Dendritic cell treated with granulocyte-macrophage colony-stimulating factor and Interleukin-4, amounts not matched to agents 40 ng/mL and 50 ng/mL, for 4 days (primary cell): ENCODE measurements at regions of chr2 and their contacts with region 1.

Region 1: DNA sequence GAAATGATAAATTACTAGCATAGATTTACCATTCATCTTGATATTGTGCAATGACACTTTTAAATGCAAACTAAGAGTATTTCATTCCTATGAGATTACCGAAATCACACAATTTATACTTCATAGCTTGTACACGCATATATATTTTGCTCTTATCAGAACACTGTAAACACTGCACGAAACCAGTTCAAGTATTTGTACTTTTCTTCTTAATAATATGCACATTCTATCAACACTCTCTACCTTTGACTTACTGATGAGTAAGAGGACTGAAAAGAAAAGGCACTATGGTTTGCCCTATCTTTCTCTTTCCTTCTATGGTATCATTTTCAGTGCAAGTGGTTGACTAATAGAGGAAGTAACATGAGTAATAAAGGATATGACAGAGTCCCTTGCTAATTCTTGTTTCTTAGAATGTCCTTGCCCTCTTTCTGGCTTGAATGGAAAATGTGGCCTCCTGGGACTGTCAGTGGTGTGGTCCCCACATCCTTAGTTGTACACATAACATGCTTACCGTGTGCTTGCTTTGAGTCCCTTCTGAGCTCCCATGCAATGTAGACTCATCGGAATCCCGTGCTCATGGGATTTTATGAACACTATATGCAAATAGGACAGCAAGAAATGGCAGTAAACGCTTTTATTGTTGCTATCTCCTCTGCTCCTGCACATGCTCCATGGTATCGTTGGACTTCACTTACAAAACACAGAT is 363.5 kb upstream of the TNP1 start:
- H3K4me3 Mint-ChIP-seq: no peak overlapping the region
- H3K27ac Mint-ChIP-seq: no peak overlapping the region
- H3K4me1 Mint-ChIP-seq: peaks cover 48% of the 10 kb centered on the region
- H3K27me3 Mint-ChIP-seq: peaks cover 73% of the 10 kb centered on the region

Region 2: DNA sequence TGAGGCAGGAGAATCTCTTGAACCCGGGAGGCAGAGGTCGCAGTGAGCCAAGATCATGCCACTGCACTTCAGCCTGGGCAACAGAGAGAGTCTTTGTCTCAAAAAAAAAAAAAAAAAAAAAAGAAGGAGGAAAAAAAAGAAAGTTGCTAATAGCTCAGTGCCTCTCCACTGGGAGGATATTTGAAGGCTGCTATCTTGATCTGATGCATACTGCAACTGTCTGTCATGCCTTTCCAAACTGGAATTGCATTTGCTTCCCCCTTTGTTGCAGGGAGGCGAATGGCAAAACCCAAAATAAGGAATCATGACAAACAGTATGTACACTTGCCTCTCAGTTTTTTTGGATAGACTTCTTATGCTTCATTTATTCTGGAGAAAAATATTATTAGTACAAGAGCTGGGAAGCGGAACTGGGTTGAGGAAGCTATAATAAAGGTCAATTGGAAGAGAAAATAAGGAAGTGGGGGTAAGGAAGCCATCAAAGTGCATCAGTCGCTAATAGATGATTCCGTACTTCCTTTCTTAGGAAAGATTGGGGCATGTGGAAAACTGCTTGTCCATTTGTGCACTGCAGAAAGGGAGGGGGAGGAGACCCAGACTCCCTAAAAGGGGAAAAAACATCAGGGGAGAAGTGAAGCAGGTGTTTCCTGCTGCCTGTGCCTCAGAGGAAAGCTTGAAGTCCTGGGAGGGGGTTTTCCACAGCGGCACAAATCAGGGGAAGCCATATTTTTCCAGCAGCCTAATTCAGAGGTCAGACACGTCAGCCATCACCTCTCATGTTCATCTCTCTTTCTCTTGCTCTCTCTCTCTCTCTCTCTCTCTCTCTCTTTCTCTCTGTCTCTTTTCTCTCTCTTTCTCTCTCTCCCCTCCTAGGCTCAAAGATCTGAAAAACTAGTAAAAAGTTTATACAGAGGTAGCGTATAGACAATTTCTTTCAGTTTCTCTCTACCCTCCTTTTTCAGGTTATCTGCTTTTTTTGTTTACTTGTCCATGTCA is 62.1 kb before region 1 on chr2:
- intact Hi-C with region 1: loop called (anchors 2 kb)
- H3K4me3 Mint-ChIP-seq: no peak overlapping the region
- H3K27ac Mint-ChIP-seq: no peak overlapping the region
- H3K4me1 Mint-ChIP-seq: peaks cover 20% of the 10 kb centered on the region
- H3K27me3 Mint-ChIP-seq: peaks cover 63% of the 10 kb centered on the region

Region 3: DNA sequence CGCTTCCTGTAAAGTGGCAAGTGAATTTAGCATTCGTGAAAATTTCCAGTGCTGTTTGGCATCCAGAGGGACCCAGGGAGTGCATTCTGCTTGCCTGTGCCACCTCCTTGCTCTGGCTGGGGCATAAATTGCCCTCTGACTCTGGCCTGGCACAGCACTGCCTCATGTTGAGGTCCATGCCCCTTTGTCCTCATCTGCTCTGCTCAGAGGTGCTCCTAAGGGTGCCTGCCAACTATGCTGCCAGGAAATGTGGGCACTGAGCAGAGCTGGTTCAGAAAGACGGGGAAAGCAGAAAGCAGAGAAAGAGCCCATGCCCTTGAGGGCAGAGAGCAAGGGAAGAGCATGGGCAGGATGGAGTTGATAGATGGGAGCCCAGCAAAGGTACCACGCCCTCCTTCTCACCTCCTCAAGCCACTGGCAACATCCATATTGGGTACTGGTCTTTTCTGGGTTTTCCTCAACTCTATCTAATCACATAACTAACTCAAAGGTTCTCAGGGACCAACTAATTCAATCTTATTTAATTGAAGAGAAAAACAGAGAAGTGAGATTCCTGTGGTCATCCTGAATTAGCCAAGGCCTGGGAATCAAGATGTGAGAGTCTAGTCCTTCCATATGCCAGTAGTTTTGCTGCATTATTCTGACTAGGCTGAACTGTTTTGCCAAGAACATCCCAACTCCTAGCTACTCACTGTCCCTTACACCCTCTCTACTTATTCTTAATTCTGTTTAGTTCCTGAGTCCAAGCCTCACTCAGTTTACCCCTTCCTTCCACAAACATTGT is 78.0 kb after region 1 on chr2:
- intact Hi-C with region 1: loop called (anchors 5 kb)
- H3K4me3 Mint-ChIP-seq: no peak overlapping the region
- H3K27ac Mint-ChIP-seq: no peak overlapping the region
- H3K4me1 Mint-ChIP-seq: peaks cover 11% of the 10 kb centered on the region
- H3K27me3 Mint-ChIP-seq: peaks cover 87% of the 10 kb centered on the region